Body of pancreas (tissue), 4 donors: ENCODE measurements at regions of chr14 and their contacts with region 1.

Region 1: DNA sequence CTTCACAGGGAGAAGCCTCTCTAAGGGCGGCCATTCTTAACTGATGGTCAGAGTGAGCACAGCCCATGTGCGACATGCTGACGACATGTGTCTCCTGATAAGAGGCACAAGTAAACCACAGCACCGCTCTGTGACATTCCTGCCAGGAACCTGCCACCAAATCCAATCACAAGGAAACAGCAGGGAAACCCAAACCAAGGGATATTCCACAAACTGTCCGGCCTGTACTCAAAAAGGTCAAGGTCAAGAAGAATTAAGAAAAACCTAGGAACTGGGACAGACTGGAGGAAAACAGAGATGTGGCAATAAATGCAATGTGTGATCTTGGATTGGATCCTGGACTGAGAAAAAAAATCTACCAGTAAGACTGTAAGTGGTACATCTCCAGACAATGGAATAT is 91.9 kb downstream of the SYNE3 start:
- DNase-seq: peak in 2 of 4 donors; percentile 36 to 52
- ATAC-seq: peak; percentile 58
- H3K4me3 ChIP-seq: no peak overlapping the region
- H3K27ac ChIP-seq: no peak overlapping the region
- H3K4me1 ChIP-seq: no peaks in the 10 kb centered on the region
- H3K27me3 ChIP-seq: no peaks in the 10 kb centered on the region
- CTCF ChIP-seq: no peak
- POLR2A ChIP-seq: no peak

Region 2: DNA sequence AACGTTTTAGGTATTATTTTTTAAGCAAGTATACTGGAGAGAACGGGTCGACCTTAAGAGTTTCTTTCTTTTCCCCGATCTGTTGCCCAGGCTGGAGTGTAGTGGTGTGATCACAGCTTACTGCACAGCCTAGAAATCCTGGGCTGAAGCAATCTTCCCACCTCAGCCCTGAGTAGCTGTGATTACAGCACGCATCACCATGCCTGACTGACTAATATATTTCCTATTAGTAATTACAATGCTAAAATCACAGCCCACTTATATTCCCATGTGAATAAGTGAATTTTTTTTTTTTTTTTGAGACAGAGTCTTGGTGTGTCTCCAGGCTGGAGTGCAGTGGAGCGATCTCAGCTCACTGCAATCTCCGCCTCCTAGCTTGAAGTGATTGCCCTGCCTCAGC is 317.6 kb before region 1 on chr14:
- intact Hi-C with region 1: loop called (anchors 10 kb)
- DNase-seq: no peak
- ATAC-seq: no peak
- H3K4me3 ChIP-seq: no peak overlapping the region
- H3K27ac ChIP-seq: no peak overlapping the region
- H3K4me1 ChIP-seq: peaks cover 8% of the 10 kb centered on the region
- H3K27me3 ChIP-seq: no peaks in the 10 kb centered on the region
- CTCF ChIP-seq: no peak
- POLR2A ChIP-seq: no peak